Astrocyte of the cerebellum (primary cell): ENCODE measurements at regions of chr19 and their contacts with region 1.

Region 1: DNA sequence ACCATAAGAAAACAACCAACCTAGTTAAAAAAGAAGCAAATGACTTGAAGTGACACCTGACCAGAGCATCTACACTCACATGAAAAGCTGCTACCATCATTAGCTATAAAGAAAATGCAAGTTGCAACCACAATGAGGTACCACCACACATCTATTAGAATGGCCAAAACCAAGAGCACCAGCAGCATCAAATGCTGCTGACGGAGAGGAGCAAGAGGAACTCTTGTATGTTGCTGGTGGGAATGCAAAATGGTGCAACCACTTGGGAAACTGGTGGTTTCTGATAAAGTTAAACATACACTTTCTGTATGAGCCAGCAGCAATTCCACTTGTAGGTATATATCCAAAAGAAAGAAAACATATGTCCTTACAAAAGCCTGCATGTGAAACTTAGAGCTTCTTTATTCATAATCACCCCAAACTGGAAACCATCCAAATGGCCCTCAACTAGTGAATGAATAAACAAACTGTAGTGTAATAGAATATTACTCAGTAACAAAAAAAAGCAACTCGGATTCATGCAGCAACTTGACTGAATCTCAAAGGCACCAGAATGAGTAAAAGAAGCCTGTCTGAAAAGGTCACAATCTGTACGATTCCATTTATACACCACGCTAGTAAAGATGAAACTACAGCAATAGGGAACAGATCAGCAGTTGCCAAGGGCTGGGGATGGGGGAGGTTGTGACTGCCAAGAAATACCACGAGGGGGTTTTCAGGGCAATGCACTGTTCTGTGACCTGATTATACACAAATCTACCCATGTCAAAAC is 60.9 kb upstream of the RANBP3 start:
- DNase-seq: no peak
- H3K4me3 ChIP-seq: no peak overlapping the region
- CTCF ChIP-seq: no peak

Region 2: DNA sequence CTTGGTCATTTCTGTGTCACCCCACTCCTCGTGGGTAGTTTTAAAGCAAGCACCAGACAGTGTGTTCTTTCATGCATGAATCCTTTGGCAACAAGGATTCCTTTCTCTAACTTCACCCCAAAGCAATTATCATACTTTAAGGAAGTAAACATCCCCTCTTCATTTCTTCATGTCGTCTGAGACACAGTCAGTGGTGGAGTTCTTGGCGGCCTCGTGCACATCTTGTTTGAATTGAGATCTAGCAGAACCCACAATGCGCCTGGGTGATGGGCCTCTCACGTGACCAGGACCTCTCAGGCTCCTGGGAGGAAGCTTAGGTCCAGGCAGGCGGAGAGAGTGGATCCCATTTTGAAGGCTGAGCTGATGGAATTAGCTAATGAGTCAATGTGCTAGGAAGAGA is 99.2 kb after region 1 on chr19:
- in situ Hi-C with region 1: loop called (anchors 5 kb)
- DNase-seq: no peak
- H3K4me3 ChIP-seq: no peak overlapping the region
- CTCF ChIP-seq: no peak

Region 3: DNA sequence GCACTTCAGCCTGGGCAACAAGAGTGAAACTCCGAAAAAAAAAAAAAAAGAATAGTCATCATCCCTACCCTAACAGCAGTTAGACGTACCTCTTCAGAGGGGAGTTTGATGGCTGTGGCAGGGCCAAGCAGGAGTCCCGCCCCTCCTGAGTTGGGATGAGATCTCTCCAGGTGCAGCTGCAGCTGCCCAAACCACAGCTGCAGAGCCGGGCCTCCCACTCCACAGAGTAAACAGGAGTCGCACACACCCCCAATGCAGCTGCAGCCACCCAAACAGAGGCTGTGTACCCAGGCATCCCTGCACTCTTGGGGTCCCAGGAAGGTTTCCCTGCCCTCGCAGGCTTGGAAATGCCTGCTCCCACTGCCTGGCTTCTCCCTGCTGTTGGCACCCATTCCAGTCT is 258.4 kb after region 1 on chr19:
- in situ Hi-C with region 1: loop called (anchors 5 kb)
- DNase-seq: no peak
- H3K4me3 ChIP-seq: no peak overlapping the region
- CTCF ChIP-seq: no peak